CD14-positive monocyte (primary cell): ENCODE measurements at regions of chr2 and their contacts with region 1.

Region 1: DNA sequence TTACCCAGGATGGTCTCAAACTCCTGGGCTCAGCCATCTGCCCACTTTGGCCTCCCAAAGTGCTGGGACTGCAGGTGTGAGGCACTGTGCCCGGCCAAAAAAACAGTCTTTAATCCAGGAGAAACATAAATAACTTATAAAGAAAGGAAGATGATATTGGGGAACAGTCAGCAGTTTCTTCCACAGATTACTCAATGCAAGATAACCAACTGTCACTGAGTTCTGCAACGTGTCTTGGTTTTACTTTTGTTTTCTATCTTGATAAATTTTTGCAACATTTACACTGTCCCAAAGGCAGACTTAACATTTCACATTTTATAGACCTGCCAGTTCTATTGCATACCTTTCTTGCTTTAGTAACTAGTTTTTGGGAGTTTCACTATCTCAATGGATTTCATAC is 71.1 kb downstream of the ANKRD44 start:
- DNase-seq: peak; percentile 49 to 81 (median 55)
- H3K4me3 ChIP-seq: peak overlapping the region in 2 of 3 experiments; percentile 47 to 70
- H3K4me3 Mint-ChIP-seq: peak overlapping the region; percentile 78 to 84
- H3K27ac ChIP-seq: peak overlapping the region; percentile 86
- H3K27ac Mint-ChIP-seq: peak overlapping the region; percentile 87 to 98 (median 96)
- H3K4me1 ChIP-seq: peaks cover 54 to 79% of the 10 kb centered on the region in 2 donors
- H3K4me1 Mint-ChIP-seq: peaks cover 79% of the 10 kb centered on the region
- H3K27me3 ChIP-seq: no peaks in the 10 kb centered on the region
- H3K27me3 Mint-ChIP-seq: no peaks in the 10 kb centered on the region
- CTCF ChIP-seq: no peak

Region 2: GRCh38 chr2:197198890-197199289 is 40.5 kb before region 1 on chr2:
- intact Hi-C with region 1: loop called in 1 of 2 experiments (anchors 5 kb)
- DNase-seq: peak; percentile 60 to 73 (median 67)
- H3K4me3 ChIP-seq: peak overlapping the region; percentile 1 to 68 (median 28)
- H3K4me3 Mint-ChIP-seq: peak overlapping the region; percentile 76 to 91
- H3K27ac ChIP-seq: peak overlapping the region; percentile 59 to 83
- H3K27ac Mint-ChIP-seq: peak overlapping the region; percentile 76 to 95 (median 90)
- H3K4me1 ChIP-seq: peaks cover 52 to 69% of the 10 kb centered on the region in 2 donors
- H3K4me1 Mint-ChIP-seq: peaks cover 66% of the 10 kb centered on the region
- H3K27me3 ChIP-seq: no peaks in the 10 kb centered on the region
- H3K27me3 Mint-ChIP-seq: peaks cover 0 to 3% (median 0%) of the 10 kb centered on the region in 3 donors
- CTCF ChIP-seq: no peak